ENCODE measurements at regions of chr12 and their contacts with region 1.

Region 1: DNA sequence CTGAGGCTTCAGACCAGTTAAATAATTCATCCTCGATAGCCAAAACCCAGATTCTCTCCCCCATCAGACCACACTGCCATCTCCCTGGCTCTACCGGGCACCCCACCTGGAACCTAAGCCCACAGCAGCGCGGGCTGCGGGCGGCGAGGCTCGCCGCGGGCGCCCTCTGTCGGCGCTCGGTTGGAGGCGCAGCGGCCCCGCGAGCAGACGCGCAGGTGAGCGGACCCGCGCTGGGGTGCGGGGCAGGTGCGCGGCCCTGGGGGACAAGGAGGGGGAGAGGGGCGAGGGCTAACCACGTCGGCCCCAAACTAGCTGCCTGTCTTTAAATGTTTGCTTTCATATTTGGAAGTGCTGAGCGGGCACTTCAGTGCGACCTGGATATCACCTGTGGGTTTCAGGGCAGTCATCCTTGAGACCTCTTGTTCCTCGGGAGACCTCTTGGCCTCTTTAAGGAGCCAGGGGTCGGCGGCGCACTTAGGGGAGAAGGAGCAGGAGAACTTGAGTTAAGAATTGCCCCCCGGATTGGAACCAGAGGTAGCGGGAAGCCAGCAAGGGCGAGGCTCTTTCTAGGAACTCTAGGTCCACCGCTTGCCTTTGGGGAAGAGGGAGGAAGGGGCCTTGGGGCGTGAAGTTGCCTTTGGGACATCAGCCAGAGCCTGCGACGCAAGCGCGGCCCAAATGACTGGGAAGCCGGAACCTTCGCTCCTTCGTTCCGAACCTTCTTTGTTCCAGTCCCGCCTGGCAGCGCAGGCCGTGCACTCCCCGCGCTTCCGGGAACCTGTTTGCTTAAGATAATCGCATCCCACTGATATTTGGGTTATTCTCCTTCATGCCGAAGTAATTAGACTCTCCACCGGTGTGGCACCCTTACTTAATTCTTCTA is 78.7 kb downstream of the NEDD1 start:
- DNase-seq: peak; percentile 6
- ATAC-seq: peak; percentile 96
- H3K4me3 ChIP-seq: no peak overlapping the region
- H3K27ac ChIP-seq: no peak overlapping the region
- H3K4me1 ChIP-seq: peaks cover 0 to 3% of the 10 kb centered on the region in 2 experiments; a peak in 1 of 4 replicates
- H3K27me3 ChIP-seq: peaks cover 24% of the 10 kb centered on the region; the same call in 1 of the 2 replicates
- CTCF ChIP-seq: peak; percentile 66 to 90 (median 84)
- POLR2A ChIP-seq: no peak
- RAD21 ChIP-seq: peak; percentile 64

Region 2: GRCh38 chr12:96578526-96579125 is 407.1 kb before region 1 on chr12:
- CTCF ChIA-PET with region 1: interaction called, 25 read pairs
- POLR2A ChIA-PET with region 1: no interaction called
- RAD21 ChIA-PET with region 1: no interaction called
- intact Hi-C with region 1: loop called (anchors 1 kb)
- DNase-seq: peak; percentile 54
- ATAC-seq: peak; percentile 90
- H3K4me3 ChIP-seq: no peak overlapping the region
- H3K27ac ChIP-seq: no peak overlapping the region
- H3K4me1 ChIP-seq: peaks cover 0 to 5% of the 10 kb centered on the region in 2 experiments; a peak in 1 of 4 replicates
- H3K27me3 ChIP-seq: no peaks in the 10 kb centered on the region
- CTCF ChIP-seq: peak; percentile 52 to 75 (median 70); a peak in 4 of 6 replicates
- POLR2A ChIP-seq: no peak
- RAD21 ChIP-seq: peak; percentile 87

Region 3: DNA sequence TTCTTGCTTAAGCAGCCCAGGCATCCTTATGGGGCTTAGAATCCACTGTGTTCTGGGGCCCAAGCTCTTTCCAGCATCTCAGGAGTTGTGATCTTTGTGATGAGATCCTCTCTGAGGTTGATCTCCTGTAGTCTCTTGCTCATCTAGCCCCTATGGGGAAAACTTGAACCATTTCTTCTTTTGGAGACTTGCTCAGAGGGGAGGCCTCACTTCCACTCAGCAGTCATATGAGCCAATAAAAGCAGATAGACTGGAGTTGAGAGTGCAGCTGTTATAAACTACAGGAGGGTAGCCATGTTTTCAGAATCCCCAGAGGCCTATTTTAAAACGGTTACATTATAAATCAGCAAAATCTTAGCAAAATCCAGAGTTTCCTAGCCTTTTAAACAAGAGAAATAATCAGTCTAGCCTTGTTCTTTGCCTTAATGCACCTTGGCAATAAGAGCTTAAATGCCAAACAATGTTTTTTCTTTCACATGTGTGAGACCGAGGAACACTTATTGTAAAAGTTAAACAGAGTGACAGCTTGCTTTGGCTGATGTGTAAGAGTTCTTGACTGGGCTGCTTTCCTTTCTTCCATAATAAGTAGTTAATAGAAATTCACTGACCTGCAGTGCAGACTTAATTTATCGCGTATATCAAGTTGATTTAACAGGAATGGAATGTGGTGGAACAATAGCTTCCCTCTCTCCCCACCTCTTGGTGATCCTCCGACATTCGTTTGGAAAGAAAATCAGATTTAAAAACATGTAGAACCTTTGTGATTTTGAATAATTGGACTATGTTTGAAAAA is 89.6 kb after region 1 on chr12:
- CTCF ChIA-PET with region 1: no interaction called
- POLR2A ChIA-PET with region 1: no interaction called
- RAD21 ChIA-PET with region 1: no interaction called
- intact Hi-C with region 1: no loop called
- DNase-seq: no peak
- ATAC-seq: no peak
- H3K4me3 ChIP-seq: no peak overlapping the region
- H3K27ac ChIP-seq: no peak overlapping the region
- H3K4me1 ChIP-seq: no peaks in the 10 kb centered on the region
- H3K27me3 ChIP-seq: 0 out of 2 replicates have a peak, but pooled peaks cover 3% of the 10 kb centered on the region
- CTCF ChIP-seq: no peak
- POLR2A ChIP-seq: no peak
- RAD21 ChIP-seq: no peak

Region 4: DNA sequence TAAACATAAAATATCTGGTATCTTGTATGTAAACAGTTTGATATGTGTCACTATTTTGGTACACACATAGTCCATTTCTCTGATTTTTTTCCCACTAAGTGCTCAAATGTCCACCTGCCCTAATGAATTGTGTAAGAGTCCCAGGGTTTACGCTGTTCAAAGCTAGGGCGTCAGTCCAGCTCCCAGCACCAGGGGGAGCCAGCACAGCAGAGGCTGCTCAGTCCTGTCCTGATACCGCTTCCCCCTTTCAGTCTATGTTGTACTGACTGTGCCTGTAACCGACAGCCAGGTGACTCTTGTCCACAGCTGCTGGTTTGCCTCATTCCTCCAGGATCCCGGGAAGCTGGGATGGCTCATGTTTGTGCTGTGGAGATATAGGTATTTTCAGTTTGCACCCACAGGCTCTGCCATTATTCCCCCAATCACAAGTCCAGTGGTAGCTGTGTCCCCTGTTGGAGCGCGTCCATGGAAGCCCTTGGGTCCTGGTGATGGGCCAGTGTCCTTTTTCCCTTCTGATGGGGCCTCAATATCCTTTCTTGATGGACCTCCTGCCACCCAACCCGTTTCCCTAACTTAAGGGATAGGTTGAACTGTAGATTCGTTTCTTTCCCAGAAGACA is 163.3 kb after region 1 on chr12:
- CTCF ChIA-PET with region 1: interaction called, 4 read pairs
- POLR2A ChIA-PET with region 1: no interaction called
- RAD21 ChIA-PET with region 1: no interaction called
- intact Hi-C with region 1: loop called (anchors 2 kb)
- DNase-seq: peak; percentile 29
- ATAC-seq: peak; percentile 100
- H3K4me3 ChIP-seq: no peak overlapping the region
- H3K27ac ChIP-seq: no peak overlapping the region
- H3K4me1 ChIP-seq: no peaks in the 10 kb centered on the region
- H3K27me3 ChIP-seq: peaks cover 27% of the 10 kb centered on the region
- CTCF ChIP-seq: peak; percentile 47 to 91 (median 89); a peak in 5 of 6 replicates
- POLR2A ChIP-seq: no peak
- RAD21 ChIP-seq: peak; percentile 70

Region 5: GRCh38 chr12:97336900-97337751 is 351.4 kb after region 1 on chr12:
- CTCF ChIA-PET with region 1: no interaction called
- POLR2A ChIA-PET with region 1: no interaction called
- RAD21 ChIA-PET with region 1: no interaction called
- intact Hi-C with region 1: no loop called
- DNase-seq: no peak
- ATAC-seq: no peak
- H3K4me3 ChIP-seq: no peak overlapping the region
- H3K27ac ChIP-seq: no peak overlapping the region
- H3K4me1 ChIP-seq: no peaks in the 10 kb centered on the region
- H3K27me3 ChIP-seq: peaks cover 18% of the 10 kb centered on the region
- CTCF ChIP-seq: no peak
- POLR2A ChIP-seq: no peak
- RAD21 ChIP-seq: no peak

Region 6: GRCh38 chr12:97404543-97404942 is 418.8 kb after region 1 on chr12:
- CTCF ChIA-PET with region 1: interaction called, 5 read pairs
- POLR2A ChIA-PET with region 1: no interaction called
- RAD21 ChIA-PET with region 1: no interaction called
- intact Hi-C with region 1: loop called (anchors 1 kb)
- DNase-seq: peak; percentile 10
- ATAC-seq: peak; percentile 69; the same call in 1 of the 2 replicates
- H3K4me3 ChIP-seq: no peak overlapping the region
- H3K27ac ChIP-seq: no peak overlapping the region
- H3K4me1 ChIP-seq: no peaks in the 10 kb centered on the region
- H3K27me3 ChIP-seq: no peaks in the 10 kb centered on the region
- CTCF ChIP-seq: peak; percentile 30 to 74 (median 71); a peak in 5 of 6 replicates
- POLR2A ChIP-seq: no peak
- RAD21 ChIP-seq: peak; percentile 57

Region 7: GRCh38 chr12:98002712-98003493 is 1017.2 kb after region 1 on chr12:
- CTCF ChIA-PET with region 1: no interaction called
- POLR2A ChIA-PET with region 1: no interaction called
- RAD21 ChIA-PET with region 1: no interaction called
- intact Hi-C with region 1: loop called (anchors 2 kb)
- DNase-seq: peak; percentile 39
- ATAC-seq: peak; percentile 78
- H3K4me3 ChIP-seq: no peak overlapping the region
- H3K27ac ChIP-seq: no peak overlapping the region
- H3K4me1 ChIP-seq: no peaks in the 10 kb centered on the region
- H3K27me3 ChIP-seq: peaks cover 6% of the 10 kb centered on the region; the same call in 1 of the 2 replicates
- CTCF ChIP-seq: peak in 2 of 3 experiments; percentile 55 to 62; a peak in 4 of 6 replicates
- POLR2A ChIP-seq: no peak
- RAD21 ChIP-seq: peak; percentile 45; the same call in 1 of the 2 replicates

Region 8: DNA sequence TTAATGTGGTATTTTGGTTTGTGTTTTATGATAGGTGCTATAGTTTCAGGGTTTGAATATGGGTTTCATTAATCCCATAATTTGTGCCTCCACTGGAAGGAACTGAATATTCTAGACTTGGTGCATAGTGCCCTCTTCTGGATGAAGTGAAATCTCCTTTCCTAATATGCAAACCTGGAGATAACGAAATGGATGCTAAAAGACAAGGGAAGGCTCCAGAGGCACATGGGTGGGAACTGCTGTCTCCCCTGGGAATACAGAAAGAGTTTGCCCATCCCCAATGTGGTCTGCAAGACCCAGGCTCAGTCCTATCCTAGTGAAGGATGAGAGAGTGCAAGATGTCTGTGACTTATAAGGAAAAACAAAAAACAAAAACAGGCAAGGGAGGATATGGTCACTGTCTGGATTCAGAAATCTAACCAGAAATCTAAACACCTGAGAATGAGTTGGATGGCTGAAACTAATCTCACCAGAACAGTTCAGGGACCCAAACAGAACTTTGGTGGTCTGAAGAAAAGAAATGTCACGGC is 1387.4 kb after region 1 on chr12:
- CTCF ChIA-PET with region 1: no interaction called
- POLR2A ChIA-PET with region 1: no interaction called
- RAD21 ChIA-PET with region 1: no interaction called
- intact Hi-C with region 1: loop called (anchors 2 kb)
- DNase-seq: peak; percentile 39
- ATAC-seq: peak; percentile 86
- H3K4me3 ChIP-seq: no peak overlapping the region
- H3K27ac ChIP-seq: no peak overlapping the region
- H3K4me1 ChIP-seq: no peaks in the 10 kb centered on the region
- H3K27me3 ChIP-seq: peaks cover 24% of the 10 kb centered on the region; the same call in 1 of the 2 replicates
- CTCF ChIP-seq: peak; percentile 57 to 78 (median 65); a peak in 5 of 6 replicates
- POLR2A ChIP-seq: no peak
- RAD21 ChIP-seq: peak; percentile 85